ENCODE measurements at regions of chr5 and their contacts with region 1.

Region 1: GRCh38 chr5:158084292-158084691 is 225.3 kb upstream of the CLINT1 start:
- DNase-seq: no peak
- H3K4me3 ChIP-seq: no peak overlapping the region
- H3K27ac ChIP-seq: no peak overlapping the region
- H3K4me1 ChIP-seq: peaks cover 17% of the 10 kb centered on the region
- H3K27me3 ChIP-seq: no peaks in the 10 kb centered on the region
- CTCF ChIP-seq: no peak
- POLR2A ChIP-seq: no peak

Region 2: GRCh38 chr5:158140120-158140731 is 55.9 kb after region 1 on chr5:
- intact Hi-C with region 1: loop called (anchors 10 kb)
- DNase-seq: no peak
- H3K4me3 ChIP-seq: no peak overlapping the region
- H3K27ac ChIP-seq: no peak overlapping the region
- H3K4me1 ChIP-seq: peaks cover 6% of the 10 kb centered on the region
- H3K27me3 ChIP-seq: no peaks in the 10 kb centered on the region
- CTCF ChIP-seq: no peak
- POLR2A ChIP-seq: no peak